ENCODE measurements at regions of chr1 and their contacts with region 1.

Region 1: DNA sequence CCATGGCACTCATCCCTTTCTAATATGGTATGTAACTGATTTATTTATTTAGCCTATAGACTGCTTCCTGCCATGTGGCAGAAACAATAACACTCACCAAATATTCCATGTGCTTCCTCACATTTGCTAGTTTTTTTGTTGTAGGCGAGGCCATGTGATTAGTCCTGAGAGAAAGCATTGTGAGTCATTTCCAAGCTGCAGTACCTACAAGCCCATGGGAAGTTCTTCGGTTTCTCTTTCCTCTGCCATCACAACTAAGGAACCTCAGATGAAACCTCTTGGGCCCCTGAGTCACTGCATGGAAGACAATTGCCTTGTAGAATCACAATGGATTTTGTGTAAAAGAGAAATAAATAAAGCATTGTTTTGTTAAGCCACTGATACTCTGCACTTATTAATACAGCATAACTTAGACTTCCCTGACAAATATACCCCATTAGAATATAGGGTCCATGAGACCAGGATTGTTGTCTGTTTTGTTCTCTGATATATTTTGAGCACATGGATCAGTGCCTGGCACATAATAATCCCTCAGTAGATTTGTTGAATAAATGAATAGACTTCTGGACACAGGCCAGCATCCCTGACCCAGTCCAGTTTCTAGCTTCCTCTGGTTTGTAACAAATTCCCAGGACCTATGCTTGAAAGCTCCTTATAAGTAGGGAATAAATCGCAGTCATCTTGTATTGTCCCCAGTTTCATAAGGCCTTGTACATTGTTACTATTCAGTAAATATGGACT is 58.3 kb upstream of the GADD45A start:
- DNase-seq: no peak
- ATAC-seq: no peak
- H3K4me3 ChIP-seq: no peak overlapping the region
- H3K27ac ChIP-seq: no peak overlapping the region
- H3K4me1 ChIP-seq: peaks cover 0 to 3% (median 0%) of the 10 kb centered on the region in 4 donors
- H3K27me3 ChIP-seq: no peaks in the 10 kb centered on the region
- CTCF ChIP-seq: no peak
- POLR2A ChIP-seq: no peak

Region 2: GRCh38 chr1:67570473-67571143 is 56.1 kb before region 1 on chr1:
- intact Hi-C with region 1: loop called (anchors 10 kb)
- DNase-seq: peak in 1 of 3 donors; percentile 58
- ATAC-seq: peak in 1 of 4 donors; percentile 8
- H3K4me3 ChIP-seq: no peak overlapping the region
- H3K27ac ChIP-seq: peak overlapping the region in 2 of 3 donors; percentile 78 to 93
- H3K4me1 ChIP-seq: peaks cover 0 to 42% (median 19%) of the 10 kb centered on the region in 4 donors
- H3K27me3 ChIP-seq: no peaks in the 10 kb centered on the region
- CTCF ChIP-seq: no peak
- POLR2A ChIP-seq: no peak